ENCODE measurements at regions of chr3 and their contacts with region 1.

Region 1: GRCh38 chr3:69013253-69014021 is at the start of gene EOGT:
- DNase-seq: peak; percentile 89
- H3K4me3 Mint-ChIP-seq: peak within 1 kb of the TSS; percentile 89
- H3K27ac Mint-ChIP-seq: peak within 1 kb of the TSS; percentile 91
- H3K4me1 Mint-ChIP-seq: peaks cover 32% of the 10 kb centered on the region
- H3K27me3 Mint-ChIP-seq: no peaks in the 10 kb centered on the region
- CTCF ChIP-seq: peak; percentile 67
- total RNA-seq, gene EOGT: 40.9 and 41.7 TPM in 2 replicates

Region 2: DNA sequence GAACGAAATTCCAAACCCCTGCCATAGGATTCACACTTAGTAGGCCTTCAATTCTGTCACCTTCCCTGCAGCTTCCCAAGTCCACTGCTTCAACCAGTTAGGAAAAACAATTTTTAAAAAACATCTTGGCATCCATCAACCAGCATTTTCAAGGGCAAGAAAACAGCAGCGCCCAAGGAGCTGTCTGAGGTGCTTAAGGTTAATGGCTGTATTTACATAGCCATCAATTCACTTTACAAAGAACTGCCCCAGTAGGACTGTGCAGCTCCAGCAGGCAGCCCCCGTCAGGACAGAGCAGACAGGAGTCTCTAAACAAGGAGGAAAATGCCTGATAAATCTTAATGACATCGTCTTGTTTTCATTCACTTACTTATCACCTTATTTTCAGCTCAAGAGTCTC is 94.4 kb before region 1 on chr3:
- CTCF ChIA-PET with region 1: no interaction called
- POLR2A ChIA-PET with region 1: no interaction called
- intact Hi-C with region 1: no loop called
- DNase-seq: peak; percentile 30
- H3K4me3 Mint-ChIP-seq: no peak overlapping the region
- H3K27ac Mint-ChIP-seq: no peak overlapping the region
- H3K4me1 Mint-ChIP-seq: no peaks in the 10 kb centered on the region
- H3K27me3 Mint-ChIP-seq: peaks cover 92% of the 10 kb centered on the region
- CTCF ChIP-seq: no peak

Region 3: GRCh38 chr3:68953816-68954444 is 59.5 kb before region 1 on chr3:
- CTCF ChIA-PET with region 1: no interaction called
- POLR2A ChIA-PET with region 1: no interaction called
- intact Hi-C with region 1: no loop called
- DNase-seq: no peak
- H3K4me3 Mint-ChIP-seq: no peak overlapping the region
- H3K27ac Mint-ChIP-seq: no peak overlapping the region
- H3K4me1 Mint-ChIP-seq: peaks cover 5% of the 10 kb centered on the region
- H3K27me3 Mint-ChIP-seq: peaks cover 79% of the 10 kb centered on the region
- CTCF ChIP-seq: no peak

Region 4: GRCh38 chr3:69044608-69045007 is 31.2 kb after region 1 on chr3:
- CTCF ChIA-PET with region 1: interaction called, 4 read pairs
- POLR2A ChIA-PET with region 1: interaction called, 61 read pairs
- intact Hi-C with region 1: no loop called
- DNase-seq: no peak
- H3K4me3 Mint-ChIP-seq: no peak overlapping the region
- H3K27ac Mint-ChIP-seq: no peak overlapping the region
- H3K4me1 Mint-ChIP-seq: peaks cover 14% of the 10 kb centered on the region
- H3K27me3 Mint-ChIP-seq: no peaks in the 10 kb centered on the region
- CTCF ChIP-seq: no peak

Measured in MCF 10A (cell line).